ENCODE measurements at regions of chr17 and their contacts with region 1.

Region 1: DNA sequence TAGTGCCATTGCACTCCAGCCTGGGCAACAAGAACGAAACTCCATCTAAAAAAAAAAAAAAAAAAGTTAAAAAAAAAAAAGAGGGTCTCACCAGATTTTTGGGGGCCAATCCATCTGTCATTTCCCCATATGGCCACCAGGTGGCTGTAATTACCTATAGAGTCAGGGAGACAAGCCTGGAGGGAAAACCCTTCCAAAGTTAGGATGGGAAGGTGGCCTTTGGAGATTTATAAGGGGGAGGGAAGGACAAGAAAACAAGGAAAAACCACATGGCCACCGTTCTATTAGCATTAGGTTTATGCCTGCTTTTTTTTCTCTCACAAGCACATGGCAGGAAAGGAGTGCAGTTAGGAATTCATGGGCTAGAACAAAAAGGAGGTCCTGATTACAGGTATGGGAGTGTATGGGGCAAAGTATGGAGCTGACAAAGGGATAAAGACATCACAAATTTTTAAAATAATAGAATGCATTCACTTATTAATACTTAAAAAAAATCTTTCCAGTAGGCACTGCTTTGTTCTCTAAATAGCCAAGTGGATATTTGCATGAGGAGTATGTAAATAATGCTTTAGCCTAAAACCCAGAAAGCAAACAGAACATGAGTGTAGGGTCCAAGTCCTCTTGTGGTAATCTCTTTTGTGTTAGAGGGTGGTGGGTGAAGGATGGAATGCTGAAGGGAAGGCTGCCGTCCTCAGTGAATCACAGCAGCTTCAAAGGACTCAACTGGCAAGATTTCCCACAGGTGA is 5.1 kb downstream of the CYB5D1 start:
- DNase-seq: peak; percentile 58
- ATAC-seq: no peak
- H3K4me3 Mint-ChIP-seq: no peak overlapping the region
- H3K27ac Mint-ChIP-seq: no peak overlapping the region
- H3K4me1 Mint-ChIP-seq: peaks cover 13% of the 10 kb centered on the region
- H3K27me3 Mint-ChIP-seq: no peaks in the 10 kb centered on the region

Region 2: DNA sequence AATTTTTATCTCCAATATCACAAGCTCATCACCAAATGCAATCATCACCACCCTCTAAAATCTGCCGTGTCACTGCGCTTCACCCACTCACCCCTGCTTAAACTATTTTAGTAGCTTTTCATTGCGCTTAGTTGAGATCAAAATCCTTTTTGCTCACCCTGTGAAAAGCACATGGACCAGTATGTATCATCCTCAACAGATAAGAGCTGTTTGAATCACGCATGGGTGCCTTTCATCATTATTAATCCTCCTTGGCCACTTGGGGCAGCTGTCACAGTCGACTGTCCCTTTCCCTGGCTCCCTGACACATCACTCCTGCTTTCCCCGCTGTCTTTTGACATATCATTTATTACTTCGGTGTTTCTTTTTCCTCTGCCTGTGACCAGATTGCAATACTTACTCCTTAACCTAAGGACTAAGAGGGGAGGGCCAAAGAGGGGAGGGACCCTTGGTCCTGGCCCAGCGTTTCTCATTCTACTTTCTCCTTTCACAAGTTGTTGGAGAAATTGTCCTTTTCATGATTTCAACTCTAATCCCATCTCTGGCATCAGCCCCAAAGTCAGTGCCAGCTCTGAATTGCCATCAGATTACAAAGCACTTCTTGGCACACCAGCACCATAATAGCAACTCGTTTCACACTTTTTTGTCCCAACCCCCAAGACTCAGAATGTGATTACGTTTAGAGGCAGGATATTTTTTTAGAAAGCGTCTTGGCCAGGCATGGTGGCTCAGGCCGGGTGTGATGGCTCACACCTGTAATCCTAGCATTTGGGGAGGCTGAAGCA is 37.5 kb before region 1 on chr17:
- CTCF ChIA-PET with region 1: interaction called, 12 read pairs
- POLR2A ChIA-PET with region 1: no interaction called
- intact Hi-C with region 1: no loop called
- DNase-seq: no peak
- ATAC-seq: peak; percentile 72
- H3K4me3 Mint-ChIP-seq: no peak overlapping the region
- H3K27ac Mint-ChIP-seq: no peak overlapping the region
- H3K4me1 Mint-ChIP-seq: peaks cover 3% of the 10 kb centered on the region
- H3K27me3 Mint-ChIP-seq: no peaks in the 10 kb centered on the region

Region 3: GRCh38 chr17:7880076-7880868 is 17.4 kb after region 1 on chr17:
- CTCF ChIA-PET with region 1: interaction called, 32 read pairs
- POLR2A ChIA-PET with region 1: no interaction called
- intact Hi-C with region 1: no loop called
- DNase-seq: no peak
- ATAC-seq: peak; percentile 24
- H3K4me3 Mint-ChIP-seq: no peak overlapping the region
- H3K27ac Mint-ChIP-seq: no peak overlapping the region
- H3K4me1 Mint-ChIP-seq: peaks cover 1% of the 10 kb centered on the region
- H3K27me3 Mint-ChIP-seq: no peaks in the 10 kb centered on the region

Region 4: GRCh38 chr17:7887482-7888183 is 24.8 kb after region 1 on chr17:
- CTCF ChIA-PET with region 1: interaction called, 7 read pairs
- POLR2A ChIA-PET with region 1: no interaction called
- intact Hi-C with region 1: loop called in 1 of 2 experiments (anchors 1 kb)
- DNase-seq: peak; percentile 94
- ATAC-seq: peak; percentile 79
- H3K4me3 Mint-ChIP-seq: no peak overlapping the region
- H3K27ac Mint-ChIP-seq: no peak overlapping the region
- H3K4me1 Mint-ChIP-seq: peaks cover 4% of the 10 kb centered on the region
- H3K27me3 Mint-ChIP-seq: no peaks in the 10 kb centered on the region

Region 5: GRCh38 chr17:7915611-7916382 is 52.9 kb after region 1 on chr17 and contains the start of gene RNF227:
- CTCF ChIA-PET with region 1: interaction called, 11 read pairs
- POLR2A ChIA-PET with region 1: no interaction called
- intact Hi-C with region 1: no loop called
- DNase-seq: peak; percentile 95
- ATAC-seq: peak; percentile 88
- H3K4me3 Mint-ChIP-seq: peak within 1 kb of the TSS; percentile 86
- H3K27ac Mint-ChIP-seq: peak within 1 kb of the TSS; percentile 82
- H3K4me1 Mint-ChIP-seq: peaks cover 27% of the 10 kb centered on the region
- H3K27me3 Mint-ChIP-seq: no peaks in the 10 kb centered on the region
- total RNA-seq, gene RNF227: 3.8 to 5.6 TPM

Measured in activated CD4-positive, alpha-beta T cell treated with anti-CD3 and anti-CD28 coated beads for 36 hours (primary cell).